ENCODE measurements at regions of chr22 and their contacts with region 1.

Region 1: GRCh38 chr22:38435010-38435409 is 20.0 kb downstream of the KCNJ4 start:
- DNase-seq: peak; percentile 75
- ATAC-seq: peak; percentile 91
- H3K4me3 Mint-ChIP-seq: no peak overlapping the region
- H3K27ac Mint-ChIP-seq: no peak overlapping the region
- H3K4me1 Mint-ChIP-seq: 0 out of 2 replicates have a peak, but pooled peaks cover 4% of the 10 kb centered on the region
- H3K27me3 Mint-ChIP-seq: peaks cover 2% of the 10 kb centered on the region; the same call in 1 of the 2 replicates
- CTCF ChIP-seq: 0 out of 2 replicates have a peak, but pooled peaks have one; percentile 35

Region 2: GRCh38 chr22:38335077-38335476 is 99.9 kb before region 1 on chr22:
- CTCF ChIA-PET with region 1: no interaction called
- POLR2A ChIA-PET with region 1: no interaction called
- DNase-seq: no peak
- ATAC-seq: no peak
- H3K4me3 Mint-ChIP-seq: peak overlapping the region; percentile 62
- H3K27ac Mint-ChIP-seq: no peak overlapping the region
- H3K4me1 Mint-ChIP-seq: peaks cover 30% of the 10 kb centered on the region
- H3K27me3 Mint-ChIP-seq: peaks cover 19% of the 10 kb centered on the region
- CTCF ChIP-seq: no peak

Region 3: GRCh38 chr22:38383417-38383816 is 51.6 kb before region 1 on chr22:
- CTCF ChIA-PET with region 1: no interaction called
- POLR2A ChIA-PET with region 1: no interaction called
- DNase-seq: no peak
- ATAC-seq: peak; percentile 48
- H3K4me3 Mint-ChIP-seq: peak overlapping the region; percentile 20; the same call in 1 of the 2 replicates
- H3K27ac Mint-ChIP-seq: peak overlapping the region; percentile 4; the same call in 1 of the 2 replicates
- H3K4me1 Mint-ChIP-seq: peaks cover 40% of the 10 kb centered on the region
- H3K27me3 Mint-ChIP-seq: no peaks in the 10 kb centered on the region
- CTCF ChIP-seq: no peak

Region 4: GRCh38 chr22:38422611-38423511 is 12.1 kb before region 1 on chr22:
- CTCF ChIA-PET with region 1: interaction called, 30 read pairs
- POLR2A ChIA-PET with region 1: no interaction called
- DNase-seq: no peak
- ATAC-seq: peak; percentile 63
- H3K4me3 Mint-ChIP-seq: no peak overlapping the region
- H3K27ac Mint-ChIP-seq: peak overlapping the region; percentile 19; the same call in 1 of the 2 replicates
- H3K4me1 Mint-ChIP-seq: peaks cover 24% of the 10 kb centered on the region
- H3K27me3 Mint-ChIP-seq: no peaks in the 10 kb centered on the region
- CTCF ChIP-seq: no peak

Region 5: DNA sequence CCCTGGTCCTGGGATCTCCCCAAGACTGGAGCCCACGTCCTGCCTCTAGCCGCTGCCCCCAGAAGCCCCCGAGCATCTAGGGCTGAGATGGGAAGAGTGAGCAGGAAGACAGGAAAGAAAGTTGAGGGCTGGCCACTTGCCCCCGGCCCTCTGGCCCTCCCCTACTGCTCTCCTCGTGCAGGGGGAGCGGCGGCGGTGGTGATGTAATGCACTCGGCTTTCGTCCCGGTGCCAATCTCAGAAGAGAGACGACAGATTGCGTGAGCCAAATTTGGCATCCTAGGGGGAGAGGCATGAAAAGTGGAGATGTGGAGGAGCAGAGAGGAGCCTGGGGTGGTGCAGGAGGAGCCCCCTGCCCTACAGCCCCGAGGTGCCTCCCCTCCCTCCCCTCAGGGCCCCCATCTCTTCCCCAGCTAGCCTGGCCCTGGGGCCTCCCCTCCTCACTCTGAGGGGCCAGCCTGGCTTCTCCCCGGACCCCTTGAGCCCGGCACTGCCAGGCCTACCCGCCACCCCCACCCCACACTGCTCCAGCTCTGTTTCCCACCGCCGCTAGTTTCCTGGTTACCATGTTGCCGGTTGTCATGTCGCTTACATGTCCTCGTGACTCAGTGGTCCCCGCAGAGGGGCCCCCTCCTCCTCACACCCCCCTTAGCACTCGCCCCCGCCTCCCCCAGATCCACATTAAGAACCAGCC is 17.5 kb after region 1 on chr22:
- CTCF ChIA-PET with region 1: interaction called, 54 read pairs
- POLR2A ChIA-PET with region 1: no interaction called
- DNase-seq: no peak
- ATAC-seq: no peak
- H3K4me3 Mint-ChIP-seq: no peak overlapping the region
- H3K27ac Mint-ChIP-seq: no peak overlapping the region
- H3K4me1 Mint-ChIP-seq: peaks cover 29% of the 10 kb centered on the region
- H3K27me3 Mint-ChIP-seq: peaks cover 56% of the 10 kb centered on the region
- CTCF ChIP-seq: no peak

Region 6: GRCh38 chr22:38461414-38462081 is 26.5 kb after region 1 on chr22:
- CTCF ChIA-PET with region 1: interaction called, 15 read pairs
- POLR2A ChIA-PET with region 1: no interaction called
- DNase-seq: peak; percentile 94
- ATAC-seq: peak; percentile 84
- H3K4me3 Mint-ChIP-seq: peak overlapping the region; percentile 49
- H3K27ac Mint-ChIP-seq: peak overlapping the region; percentile 27; the same call in 1 of the 2 replicates
- H3K4me1 Mint-ChIP-seq: peaks cover 28% of the 10 kb centered on the region
- H3K27me3 Mint-ChIP-seq: peaks cover 90% of the 10 kb centered on the region
- CTCF ChIP-seq: no peak

Measured in WTC11 (cell line).